AG04449 (cell line): ENCODE measurements at regions of chr3 and their contacts with region 1.

Region 1: DNA sequence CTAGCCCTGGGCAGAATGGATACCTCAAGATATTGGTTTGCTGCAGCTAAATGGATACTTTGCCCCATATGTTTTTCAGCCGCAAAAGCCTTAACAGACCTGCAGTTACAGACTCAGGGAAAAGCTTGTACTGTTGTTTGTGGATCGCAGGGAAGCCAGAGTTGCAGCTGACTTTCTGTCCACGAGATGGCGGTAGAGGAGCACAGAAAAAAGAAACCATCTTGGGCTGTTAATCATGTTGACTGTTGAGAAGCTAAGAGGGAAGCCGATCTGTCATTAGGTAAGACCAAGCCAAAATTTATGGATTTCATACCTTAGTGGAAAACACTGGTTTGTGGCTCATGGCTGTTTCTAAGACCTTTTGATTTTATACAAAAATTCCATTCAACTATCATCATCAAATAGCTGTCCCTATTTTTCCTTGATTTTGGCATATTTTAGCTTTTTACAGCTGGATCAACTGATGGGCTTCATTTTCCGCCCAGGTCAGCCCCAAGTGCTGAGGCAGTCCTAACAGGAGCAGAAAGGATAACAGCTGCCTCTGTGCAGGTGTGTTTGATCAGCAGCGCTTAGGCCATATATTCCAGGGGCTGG is 205.7 kb upstream of the ZPLD1 start:
- DNase-seq: no peak
- H3K4me3 ChIP-seq: no peak overlapping the region
- CTCF ChIP-seq: peak; percentile 83

Region 2: GRCh38 chr3:101381809-101382208 is 847.4 kb before region 1 on chr3:
- CTCF ChIA-PET with region 1: no interaction called
- POLR2A ChIA-PET with region 1: no interaction called
- DNase-seq: no peak
- H3K4me3 ChIP-seq: no peak overlapping the region
- CTCF ChIP-seq: no peak

Region 3: GRCh38 chr3:101827211-101828174 is 401.7 kb before region 1 on chr3:
- CTCF ChIA-PET with region 1: interaction called, 49 read pairs
- POLR2A ChIA-PET with region 1: interaction called, 4 read pairs
- DNase-seq: no peak
- H3K4me3 ChIP-seq: peak overlapping the region; percentile 61
- CTCF ChIP-seq: no peak

Region 4: DNA sequence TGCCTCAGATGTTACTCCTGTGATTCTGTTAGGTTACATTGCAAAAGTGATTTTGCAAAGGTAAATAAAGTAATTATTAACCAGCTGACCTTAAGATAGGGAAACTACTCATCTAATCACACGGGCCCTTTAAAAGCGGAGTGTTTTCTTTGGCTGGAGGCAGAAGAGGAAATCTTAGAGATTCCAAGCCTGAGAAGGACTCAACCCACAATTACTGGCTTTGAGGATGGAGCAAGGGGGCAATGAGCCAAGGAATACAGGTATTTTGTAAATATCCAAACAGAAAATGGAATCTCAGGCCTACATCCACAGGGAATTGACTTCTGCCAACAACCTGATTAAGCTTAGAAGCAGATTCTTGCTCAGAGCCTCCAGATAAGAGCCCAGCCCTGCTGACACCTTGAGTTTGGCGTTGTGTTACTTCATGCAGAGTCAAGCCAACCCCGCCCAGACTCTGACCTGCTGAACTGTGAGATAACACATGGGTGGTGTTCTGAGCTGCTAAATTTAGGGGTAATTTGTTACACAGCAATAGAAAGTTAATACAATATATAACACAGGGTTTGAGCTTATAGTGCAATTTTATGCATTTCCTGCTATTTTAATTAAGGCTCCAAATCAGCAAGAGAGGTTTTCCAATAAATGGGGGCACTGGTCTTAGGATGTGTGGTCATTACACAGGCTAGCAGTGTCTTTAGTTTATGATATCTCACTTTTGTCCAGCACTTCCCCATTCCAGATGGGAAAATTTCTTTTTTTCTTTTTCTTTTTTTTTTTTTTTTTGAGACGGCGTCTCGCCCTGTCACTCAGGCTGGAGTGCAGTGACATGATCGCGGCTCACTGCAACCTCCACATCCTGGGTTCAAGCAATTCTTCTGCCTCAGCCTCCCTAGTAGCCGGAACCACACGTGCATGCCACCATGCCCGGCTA is 360.4 kb before region 1 on chr3:
- CTCF ChIA-PET with region 1: interaction called, 25 read pairs
- POLR2A ChIA-PET with region 1: interaction called, 5 read pairs
- DNase-seq: no peak
- H3K4me3 ChIP-seq: no peak overlapping the region
- CTCF ChIP-seq: no peak

Region 5: GRCh38 chr3:102006812-102007485 is 222.2 kb before region 1 on chr3:
- CTCF ChIA-PET with region 1: interaction called, 17 read pairs
- POLR2A ChIA-PET with region 1: no interaction called
- DNase-seq: peak; percentile 94
- H3K4me3 ChIP-seq: no peak overlapping the region
- CTCF ChIP-seq: no peak

Region 6: GRCh38 chr3:102240720-102241119 is 11.6 kb after region 1 on chr3:
- CTCF ChIA-PET with region 1: interaction called, 33 read pairs
- POLR2A ChIA-PET with region 1: no interaction called
- DNase-seq: no peak
- H3K4me3 ChIP-seq: no peak overlapping the region
- CTCF ChIP-seq: no peak

Region 7: GRCh38 chr3:102544741-102545140 is 315.6 kb after region 1 on chr3:
- CTCF ChIA-PET with region 1: interaction called, 214 read pairs
- POLR2A ChIA-PET with region 1: no interaction called
- DNase-seq: no peak
- H3K4me3 ChIP-seq: no peak overlapping the region
- CTCF ChIP-seq: no peak